Kidney (tissue), 22 donors: ENCODE measurements at regions of chr7 and their contacts with region 1.

Region 1: DNA sequence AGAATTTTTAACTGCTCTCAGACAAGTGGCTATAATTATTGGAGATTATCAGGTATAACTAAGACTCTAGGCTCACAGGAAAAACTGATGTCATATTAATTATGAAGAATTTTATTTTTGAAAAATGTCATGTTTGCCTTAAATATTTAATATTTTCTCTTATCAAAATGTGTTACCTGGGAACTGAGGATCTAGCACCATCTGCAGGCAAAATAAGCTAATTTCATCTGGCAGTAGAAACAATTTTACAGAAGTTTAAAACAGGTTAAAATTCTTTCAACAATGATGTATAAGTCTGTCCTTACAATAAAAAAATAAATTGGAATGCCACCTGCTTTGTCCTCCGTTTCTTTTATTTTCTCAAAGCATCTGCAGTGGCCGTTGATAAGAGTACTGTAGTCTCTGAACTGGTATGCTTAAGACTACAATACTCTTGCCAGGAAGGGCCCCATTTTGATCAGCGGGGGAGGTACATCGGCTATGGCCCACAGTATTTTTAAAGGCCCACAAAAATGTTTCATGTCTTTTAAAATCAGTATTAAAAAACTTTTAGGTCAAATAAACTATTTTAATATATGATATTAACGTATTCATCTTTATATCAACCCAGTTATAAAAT is 81.3 kb downstream of the VWDE start:
- DNase-seq: peak in 2 of 5 donors; percentile 25 to 32
- H3K4me3 ChIP-seq: no peak overlapping the region
- H3K27ac ChIP-seq: no peak overlapping the region
- H3K4me1 ChIP-seq: peaks cover 0 to 4% (median 0%) of the 10 kb centered on the region in 3 donors
- H3K27me3 ChIP-seq: no peaks in the 10 kb centered on the region
- CTCF ChIP-seq: peak; percentile 65

Region 2: DNA sequence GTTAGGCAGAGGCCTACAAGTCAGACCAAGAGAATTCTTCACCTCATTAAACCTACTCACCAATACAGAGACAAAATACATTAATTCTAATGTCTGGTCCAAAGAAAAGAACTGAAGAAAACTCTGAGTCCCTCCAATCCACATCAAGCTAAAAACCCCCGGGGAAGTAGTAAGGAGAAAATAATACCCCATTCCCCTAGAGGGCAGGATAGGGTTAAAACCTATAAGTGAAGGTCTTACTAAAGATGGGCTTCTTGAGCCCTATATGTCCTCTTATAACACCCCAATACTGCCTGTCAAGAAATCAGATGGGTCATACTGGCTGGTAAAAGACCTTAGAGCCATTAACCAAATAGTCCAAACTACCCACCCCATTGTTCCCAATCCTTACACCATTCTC is 252.6 kb before region 1 on chr7:
- intact Hi-C with region 1: loop called (anchors 10 kb)
- DNase-seq: no peak
- H3K4me3 ChIP-seq: no peak overlapping the region
- H3K27ac ChIP-seq: no peak overlapping the region
- H3K4me1 ChIP-seq: peaks cover 0 to 9% (median 0%) of the 10 kb centered on the region in 3 donors
- H3K27me3 ChIP-seq: no peaks in the 10 kb centered on the region
- CTCF ChIP-seq: no peak

Region 3: GRCh38 chr7:12389089-12389700 is 66.8 kb after region 1 on chr7:
- intact Hi-C with region 1: no loop called
- DNase-seq: peak in 3 of 5 donors; percentile 40 to 80 (median 69)
- H3K4me3 ChIP-seq: no peak overlapping the region
- H3K27ac ChIP-seq: no peak overlapping the region
- H3K4me1 ChIP-seq: no peaks in the 10 kb centered on the region
- H3K27me3 ChIP-seq: no peaks in the 10 kb centered on the region
- CTCF ChIP-seq: peak; percentile 61